BJ (cell line): ENCODE measurements at regions of chr5 and their contacts with region 1.

Region 1: GRCh38 chr5:153964880-153965645 is 73.6 kb downstream of the FAM114A2 start:
- DNase-seq: no peak
- H3K4me3 ChIP-seq: no peak overlapping the region
- H3K27me3 ChIP-seq: no peaks in the 10 kb centered on the region
- CTCF ChIP-seq: peak; percentile 89

Region 2: DNA sequence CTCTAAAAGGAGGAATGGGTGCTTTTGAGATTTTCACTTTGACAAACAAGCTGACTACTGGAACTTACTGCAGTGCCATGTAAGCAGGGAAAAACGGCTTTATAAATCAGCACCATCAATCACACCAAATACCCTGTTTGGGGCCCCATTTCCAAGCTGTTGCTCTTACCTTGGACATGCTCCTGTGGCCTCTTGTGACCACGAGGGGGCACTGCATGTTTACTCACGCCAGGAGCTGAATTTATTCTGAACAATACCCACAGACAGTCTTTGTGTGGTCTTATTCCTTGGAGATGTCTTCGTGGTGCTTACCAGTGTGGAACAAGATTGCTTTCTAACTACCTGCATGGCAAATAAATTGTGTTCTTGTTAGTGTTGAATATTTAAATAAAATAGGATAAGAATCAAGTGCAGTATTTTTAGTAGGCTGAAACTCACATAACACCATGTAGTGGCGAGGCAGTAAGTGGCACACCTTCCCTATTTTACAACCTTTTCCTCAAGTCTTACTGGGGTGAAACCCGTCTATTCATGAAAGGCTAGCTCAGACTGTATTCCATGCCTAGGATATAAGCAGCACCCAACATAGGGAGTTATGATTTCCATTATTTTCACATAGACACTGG is 1404.4 kb before region 1 on chr5:
- CTCF ChIA-PET with region 1: interaction called, 57 read pairs
- POLR2A ChIA-PET with region 1: interaction called, 6 read pairs
- DNase-seq: peak; percentile 4
- H3K4me3 ChIP-seq: no peak overlapping the region
- H3K27me3 ChIP-seq: no peaks in the 10 kb centered on the region
- CTCF ChIP-seq: peak; percentile 78

Region 3: GRCh38 chr5:153562189-153562588 is 402.9 kb before region 1 on chr5:
- CTCF ChIA-PET with region 1: interaction called, 3 read pairs
- POLR2A ChIA-PET with region 1: interaction called, 11 read pairs
- DNase-seq: peak; percentile 61
- H3K4me3 ChIP-seq: no peak overlapping the region
- H3K27me3 ChIP-seq: no peaks in the 10 kb centered on the region
- CTCF ChIP-seq: no peak

Region 4: GRCh38 chr5:153827397-153827796 is 137.7 kb before region 1 on chr5:
- CTCF ChIA-PET with region 1: interaction called, 10 read pairs
- POLR2A ChIA-PET with region 1: no interaction called
- DNase-seq: no peak
- H3K4me3 ChIP-seq: no peak overlapping the region
- H3K27me3 ChIP-seq: no peaks in the 10 kb centered on the region
- CTCF ChIP-seq: peak; percentile 27